ENCODE measurements at regions of chr11 and their contacts with region 1.

Region 1: DNA sequence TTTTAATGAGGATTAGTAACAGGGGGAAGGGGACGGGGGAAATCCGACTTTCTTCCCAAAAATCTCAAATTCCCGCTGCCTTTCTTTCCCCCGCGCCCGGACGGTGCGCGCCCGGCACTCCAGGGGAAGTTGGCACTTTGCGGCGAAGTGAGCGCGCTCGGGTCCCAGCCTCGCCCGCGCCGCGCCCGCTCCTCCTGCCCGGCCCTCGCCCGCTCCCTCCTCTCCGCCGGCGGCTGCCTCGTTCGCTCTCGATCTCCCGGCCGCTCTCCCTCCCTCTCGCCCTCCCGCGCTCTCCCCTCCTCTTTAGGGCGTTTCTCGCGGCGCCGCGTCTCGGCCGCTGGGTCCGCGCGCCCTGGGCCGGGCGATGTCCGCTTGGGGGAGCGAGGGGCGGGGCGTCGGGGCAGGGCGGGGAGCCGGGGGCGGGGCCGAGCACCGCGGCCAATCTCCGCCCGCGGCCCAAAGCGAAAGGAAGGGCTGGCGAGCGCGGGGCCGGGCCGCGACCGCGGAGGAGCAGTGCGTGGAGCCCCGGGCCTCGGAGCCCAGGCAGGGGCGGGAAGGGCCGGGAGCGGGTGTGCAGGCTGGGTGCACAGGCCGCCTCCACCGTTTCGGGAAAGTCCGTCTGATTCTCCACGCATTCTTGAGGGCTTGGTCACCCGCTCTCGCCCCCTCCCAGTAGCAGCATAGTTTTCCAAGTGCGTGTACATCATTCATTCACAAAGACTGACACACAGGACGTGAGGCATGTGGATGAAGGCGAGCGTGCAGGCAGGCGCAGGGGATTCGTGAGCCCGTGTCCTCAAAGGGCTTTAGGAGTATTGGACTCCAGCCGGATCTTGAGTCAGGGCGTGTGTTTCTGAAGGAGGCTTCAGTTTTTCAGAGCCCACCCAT is 65.1 kb downstream of the ETS1 start:
- DNase-seq: peak; percentile 99
- H3K4me3 ChIP-seq: peak overlapping the region; percentile 85 to 95 (median 87)
- H3K27ac ChIP-seq: peak overlapping the region; percentile 96
- H3K4me1 ChIP-seq: peaks cover 55% of the 10 kb centered on the region
- H3K27me3 ChIP-seq: no peaks in the 10 kb centered on the region
- CTCF ChIP-seq: no peak

Region 2: DNA sequence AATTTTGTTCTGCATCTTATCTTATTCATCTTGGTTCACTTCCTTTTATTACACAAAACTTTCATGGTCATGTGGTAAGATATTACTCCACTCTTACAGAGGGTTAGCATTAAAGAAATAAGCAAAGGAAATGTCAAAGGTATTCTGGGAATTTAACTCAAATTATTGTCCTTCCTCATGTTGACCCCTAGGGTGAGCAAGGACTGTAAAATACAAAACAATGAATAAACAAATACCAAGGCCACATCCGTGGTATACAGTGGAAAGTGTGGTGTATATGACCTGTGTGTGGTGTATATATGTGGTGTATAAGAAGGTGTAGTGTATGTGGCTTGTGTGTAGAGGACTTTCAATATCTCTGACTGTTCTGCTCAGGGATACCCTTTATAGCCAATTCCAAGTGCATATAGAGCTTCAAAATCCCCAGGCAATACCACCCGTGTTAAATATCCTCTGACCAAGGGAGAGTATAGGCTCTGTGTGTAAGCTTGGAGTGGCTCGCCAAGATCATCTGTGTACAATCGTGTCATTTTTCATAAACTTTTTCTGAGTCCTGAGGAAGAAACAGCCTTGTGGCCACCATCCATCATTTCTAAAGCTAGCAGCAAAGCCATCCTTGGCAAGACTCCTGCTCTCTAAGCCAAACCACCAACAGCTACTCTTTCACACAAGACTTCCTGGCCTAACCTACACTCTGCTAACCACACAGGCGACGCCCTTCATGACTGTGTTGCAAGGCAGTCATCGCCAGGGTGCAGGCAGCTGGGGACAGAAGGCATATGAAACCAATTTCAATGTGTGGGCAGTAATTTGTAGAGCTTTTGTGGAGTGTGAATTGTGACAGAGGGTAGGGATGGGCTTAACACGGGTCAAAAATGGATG is 482.9 kb before region 1 on chr11:
- CTCF ChIA-PET with region 1: no interaction called
- dilution Hi-C with region 1: no loop called
- in situ Hi-C with region 1: loop called in 1 of 2 experiments (anchors 25 kb)
- intact Hi-C with region 1: no loop called
- DNase-seq: peak; percentile 88
- H3K4me3 ChIP-seq: no peak overlapping the region
- H3K27ac ChIP-seq: peak overlapping the region; percentile 8
- H3K4me1 ChIP-seq: peaks cover 18% of the 10 kb centered on the region
- H3K27me3 ChIP-seq: no peaks in the 10 kb centered on the region
- CTCF ChIP-seq: peak; percentile 3 to 10

Region 3: GRCh38 chr11:128290106-128290840 is 232.0 kb before region 1 on chr11:
- CTCF ChIA-PET with region 1: no interaction called
- dilution Hi-C with region 1: no loop called
- in situ Hi-C with region 1: no loop called
- intact Hi-C with region 1: loop called (anchors 1 kb)
- DNase-seq: peak; percentile 45
- H3K4me3 ChIP-seq: no peak overlapping the region
- H3K27ac ChIP-seq: no peak overlapping the region
- H3K4me1 ChIP-seq: peaks cover 4% of the 10 kb centered on the region
- H3K27me3 ChIP-seq: no peaks in the 10 kb centered on the region
- CTCF ChIP-seq: peak; percentile 79 to 86

Region 4: DNA sequence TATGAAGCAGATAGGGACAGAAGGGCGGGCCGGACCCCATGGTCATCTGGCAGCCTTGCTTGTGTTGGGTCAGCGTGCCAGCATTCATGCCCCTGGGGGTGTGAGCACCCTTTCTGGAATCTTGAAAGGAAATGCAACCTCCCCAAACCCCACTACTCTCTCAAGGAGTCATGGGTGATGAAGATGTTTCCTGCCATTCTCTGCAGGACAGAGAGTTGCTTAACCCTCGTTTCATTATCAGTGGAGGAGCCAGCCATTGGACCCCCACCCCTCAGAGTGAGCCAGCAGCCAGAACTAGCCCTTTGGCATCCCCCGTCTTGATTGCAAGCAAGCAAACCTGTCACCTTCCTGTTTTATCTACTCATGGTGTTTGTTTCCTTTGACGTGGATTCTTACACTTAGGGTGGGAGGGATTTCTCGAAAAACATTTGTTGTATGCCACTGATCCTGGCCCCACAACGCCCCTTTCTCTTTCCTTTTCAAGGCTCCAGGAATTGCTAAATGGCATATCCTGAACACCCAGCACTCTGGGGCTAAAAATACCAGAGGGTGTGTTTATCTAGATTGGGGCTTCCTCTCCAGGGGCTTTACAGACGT is 193.2 kb before region 1 on chr11:
- CTCF ChIA-PET with region 1: no interaction called
- dilution Hi-C with region 1: no loop called
- in situ Hi-C with region 1: no loop called
- intact Hi-C with region 1: no loop called
- DNase-seq: no peak
- H3K4me3 ChIP-seq: no peak overlapping the region
- H3K27ac ChIP-seq: no peak overlapping the region
- H3K4me1 ChIP-seq: no peaks in the 10 kb centered on the region
- H3K27me3 ChIP-seq: peaks cover 3% of the 10 kb centered on the region
- CTCF ChIP-seq: no peak

Region 5: DNA sequence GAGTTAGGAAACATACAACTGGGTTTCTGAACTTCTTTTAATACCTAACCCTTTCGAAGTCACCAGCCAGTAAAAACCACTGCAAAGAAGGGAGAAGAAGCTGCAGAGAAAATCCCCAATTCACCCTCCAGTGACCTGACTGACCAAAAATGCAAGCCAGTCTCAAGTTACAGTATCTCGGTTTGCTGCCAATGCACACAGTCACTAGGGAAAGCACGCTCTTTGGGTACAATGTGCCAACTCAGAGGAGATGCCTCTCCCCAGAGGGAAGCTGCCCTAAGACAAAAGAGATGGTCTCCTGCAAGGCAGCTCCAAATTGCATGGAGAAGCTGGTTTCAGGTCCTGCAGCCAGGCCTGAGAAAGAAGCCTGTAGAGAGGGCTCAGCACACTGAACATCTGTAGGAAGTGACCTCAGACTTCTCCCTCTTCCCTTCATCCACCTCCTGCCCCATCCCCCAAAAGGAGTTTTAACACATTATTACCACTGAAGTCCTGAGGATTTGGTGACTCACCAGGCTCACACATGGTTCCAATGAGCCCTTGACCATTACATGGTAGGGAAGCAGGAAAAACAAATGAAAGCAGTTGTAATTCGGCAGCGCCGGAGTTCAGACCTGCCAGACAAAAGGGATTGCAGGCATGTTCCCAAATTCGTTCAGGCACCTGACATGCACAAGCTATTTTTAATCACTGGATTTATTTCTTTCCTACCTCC is 25.1 kb before region 1 on chr11:
- CTCF ChIA-PET with region 1: interaction called, 4 read pairs
- dilution Hi-C with region 1: no loop called
- in situ Hi-C with region 1: no loop called
- intact Hi-C with region 1: loop called (anchors 1 kb)
- DNase-seq: peak; percentile 90
- H3K4me3 ChIP-seq: peak overlapping the region; percentile 2 to 25 (median 18)
- H3K27ac ChIP-seq: peak overlapping the region; percentile 82
- H3K4me1 ChIP-seq: peaks cover 72% of the 10 kb centered on the region
- H3K27me3 ChIP-seq: no peaks in the 10 kb centered on the region
- CTCF ChIP-seq: no peak

Region 6: GRCh38 chr11:128582496-128583366 is 60.4 kb after region 1 on chr11:
- CTCF ChIA-PET with region 1: no interaction called
- dilution Hi-C with region 1: loop called (anchors 5 kb)
- in situ Hi-C with region 1: no loop called
- intact Hi-C with region 1: loop called (anchors 1 kb)
- DNase-seq: peak; percentile 49
- H3K4me3 ChIP-seq: no peak overlapping the region
- H3K27ac ChIP-seq: no peak overlapping the region
- H3K4me1 ChIP-seq: peaks cover 19% of the 10 kb centered on the region
- H3K27me3 ChIP-seq: no peaks in the 10 kb centered on the region
- CTCF ChIP-seq: no peak

Region 7: DNA sequence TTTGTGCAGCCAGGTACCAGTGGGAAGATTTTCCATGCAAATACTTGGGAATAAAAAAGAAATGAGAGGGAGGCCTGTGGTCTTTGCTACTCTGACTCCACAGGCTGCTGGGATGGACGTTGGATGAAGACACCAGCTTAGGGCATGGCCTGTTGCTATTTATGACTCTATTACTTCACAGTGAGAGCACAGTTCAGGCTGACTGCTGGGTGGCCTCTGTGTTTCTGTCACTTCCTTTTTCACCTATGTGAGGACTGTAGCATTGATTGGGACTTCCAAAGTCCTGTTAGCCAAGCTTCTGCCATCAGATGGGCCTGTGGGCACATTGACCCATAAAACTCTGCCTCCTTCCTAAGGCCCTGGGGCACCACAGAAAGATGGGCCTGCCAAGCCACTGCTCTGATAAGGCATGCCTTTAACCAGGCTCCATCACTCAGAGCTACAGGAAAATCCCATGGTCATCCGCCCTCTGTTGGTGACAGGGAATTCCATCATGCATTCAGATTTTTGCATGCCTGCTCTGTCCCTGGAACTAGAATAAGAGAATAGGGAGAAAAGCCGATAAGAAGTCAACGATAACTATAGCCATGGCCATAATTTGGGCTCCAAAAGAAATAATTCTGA is 280.2 kb after region 1 on chr11:
- CTCF ChIA-PET with region 1: interaction called, 18 read pairs
- dilution Hi-C with region 1: no loop called
- in situ Hi-C with region 1: no loop called
- intact Hi-C with region 1: no loop called
- DNase-seq: peak; percentile 26
- H3K4me3 ChIP-seq: no peak overlapping the region
- H3K27ac ChIP-seq: no peak overlapping the region
- H3K4me1 ChIP-seq: peaks cover 7% of the 10 kb centered on the region
- H3K27me3 ChIP-seq: no peaks in the 10 kb centered on the region
- CTCF ChIP-seq: peak; percentile 56 to 70

Measured in mammary epithelial cell (primary cell).